CD8-positive, alpha-beta T cell (primary cell): ENCODE measurements at regions of chr1 and their contacts with region 1.

Region 1: GRCh38 chr1:25487628-25488027 is 55.8 kb upstream of the LDLRAP1 start:
- DNase-seq: peak in 7 of 9 experiments; percentile 16 to 61 (median 55)
- ATAC-seq: peak; percentile 54
- H3K4me3 ChIP-seq: no peak overlapping the region
- H3K4me3 Mint-ChIP-seq: no peak overlapping the region
- H3K27ac ChIP-seq: no peak overlapping the region
- H3K27ac Mint-ChIP-seq: no peak overlapping the region
- H3K4me1 ChIP-seq: no peaks in the 10 kb centered on the region
- H3K4me1 Mint-ChIP-seq: peaks cover 12% of the 10 kb centered on the region
- H3K27me3 ChIP-seq: no peaks in the 10 kb centered on the region
- H3K27me3 Mint-ChIP-seq: no peaks in the 10 kb centered on the region
- CTCF ChIP-seq: peak; percentile 74

Region 2: DNA sequence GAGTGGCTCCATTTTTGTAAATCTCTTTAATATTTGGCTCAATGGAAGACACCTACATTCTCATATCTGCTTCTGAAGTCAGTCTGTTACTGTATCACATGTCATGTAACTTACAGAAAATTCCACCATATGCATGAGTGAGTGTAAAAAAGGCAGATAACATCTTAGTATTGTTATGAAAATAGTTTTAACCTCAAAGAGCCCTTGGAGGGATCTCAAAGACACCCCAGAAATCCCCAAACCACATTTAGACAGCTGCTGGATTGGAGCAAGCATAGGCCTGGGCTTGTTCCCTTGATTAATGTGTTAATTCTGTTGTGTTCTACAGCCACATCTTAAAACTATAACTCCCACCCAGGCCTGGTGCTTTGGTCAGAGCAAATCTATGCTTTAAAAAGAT is 40.1 kb before region 1 on chr1:
- CTCF ChIA-PET with region 1: interaction called, 14 read pairs
- POLR2A ChIA-PET with region 1: no interaction called
- intact Hi-C with region 1: no loop called
- DNase-seq: peak in 1 of 9 experiments; percentile 24
- ATAC-seq: no peak
- H3K4me3 ChIP-seq: no peak overlapping the region
- H3K4me3 Mint-ChIP-seq: no peak overlapping the region
- H3K27ac ChIP-seq: no peak overlapping the region
- H3K27ac Mint-ChIP-seq: no peak overlapping the region
- H3K4me1 ChIP-seq: peaks cover 10% of the 10 kb centered on the region
- H3K4me1 Mint-ChIP-seq: peaks cover 29% of the 10 kb centered on the region
- H3K27me3 ChIP-seq: no peaks in the 10 kb centered on the region
- H3K27me3 Mint-ChIP-seq: no peaks in the 10 kb centered on the region
- CTCF ChIP-seq: no peak

Region 3: GRCh38 chr1:25476186-25477097 is 11.2 kb before region 1 on chr1:
- CTCF ChIA-PET with region 1: interaction called, 41 read pairs
- POLR2A ChIA-PET with region 1: interaction called, 5 read pairs
- intact Hi-C with region 1: loop called in 1 of 2 experiments (anchors 2 kb)
- DNase-seq: peak in 1 of 9 experiments; percentile 21
- ATAC-seq: no peak
- H3K4me3 ChIP-seq: no peak overlapping the region
- H3K4me3 Mint-ChIP-seq: no peak overlapping the region
- H3K27ac ChIP-seq: no peak overlapping the region
- H3K27ac Mint-ChIP-seq: peak overlapping the region; percentile 77
- H3K4me1 ChIP-seq: peaks cover 49% of the 10 kb centered on the region
- H3K4me1 Mint-ChIP-seq: peaks cover 64% of the 10 kb centered on the region
- H3K27me3 ChIP-seq: no peaks in the 10 kb centered on the region
- H3K27me3 Mint-ChIP-seq: no peaks in the 10 kb centered on the region
- CTCF ChIP-seq: no peak